ENCODE measurements at regions of chr10 and their contacts with region 1.

Region 1: DNA sequence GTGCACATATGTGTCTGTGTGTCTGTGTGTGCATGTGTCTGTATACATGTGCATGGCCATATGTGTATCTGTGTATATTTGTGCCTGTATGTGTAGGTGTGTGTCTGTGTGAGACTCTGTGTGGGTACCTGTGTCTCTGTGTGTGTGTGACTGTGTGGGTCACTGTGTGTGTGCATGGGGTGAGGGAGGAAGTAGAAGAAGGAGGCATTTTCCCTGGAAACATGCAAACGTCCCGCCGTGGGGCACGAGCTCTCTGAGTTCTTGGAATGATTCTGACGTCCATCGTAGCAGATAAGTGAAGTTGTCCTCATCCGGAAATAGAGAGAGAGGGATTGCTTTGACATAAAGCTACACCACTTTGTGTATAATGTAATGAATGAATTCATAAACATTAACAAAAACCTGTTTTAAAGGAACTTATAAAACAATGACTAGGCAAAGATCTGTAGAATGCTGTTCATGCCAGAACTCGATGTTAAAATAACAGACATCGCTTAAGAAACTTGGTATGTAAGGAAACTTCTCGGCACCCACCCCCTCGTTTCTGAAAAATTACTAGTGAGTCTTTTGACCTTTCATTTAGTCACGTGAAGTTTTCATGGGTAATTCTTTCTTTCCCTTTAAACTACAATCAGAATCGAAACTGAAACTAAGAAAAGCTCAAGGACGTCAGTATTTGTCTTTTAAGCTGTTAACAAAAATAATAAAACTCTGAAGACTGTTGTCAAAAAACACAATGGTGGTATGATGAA is 43.6 kb upstream of the KLF6 start:
- DNase-seq: no peak
- H3K4me3 ChIP-seq: no peak overlapping the region
- H3K27ac ChIP-seq: no peak overlapping the region
- H3K4me1 ChIP-seq: peaks cover 31% of the 10 kb centered on the region
- H3K27me3 ChIP-seq: no peaks in the 10 kb centered on the region
- CTCF ChIP-seq: no peak

Region 2: GRCh38 chr10:3852147-3852904 is 23.7 kb after region 1 on chr10:
- CTCF ChIA-PET with region 1: no interaction called
- POLR2A ChIA-PET with region 1: interaction called, 7 read pairs
- intact Hi-C with region 1: loop called (anchors 1 kb)
- DNase-seq: peak; percentile 74 to 99
- H3K4me3 ChIP-seq: peak overlapping the region; percentile 16; the same call in 1 of the 2 replicates
- H3K27ac ChIP-seq: peak overlapping the region; percentile 96
- H3K4me1 ChIP-seq: peaks cover 28% of the 10 kb centered on the region
- H3K27me3 ChIP-seq: no peaks in the 10 kb centered on the region
- CTCF ChIP-seq: no peak

Region 3: GRCh38 chr10:3895045-3895631 is 66.6 kb after region 1 on chr10:
- CTCF ChIA-PET with region 1: no interaction called
- POLR2A ChIA-PET with region 1: no interaction called
- intact Hi-C with region 1: loop called (anchors 5 kb)
- DNase-seq: peak in 1 of 2 experiments; percentile 47
- H3K4me3 ChIP-seq: no peak overlapping the region
- H3K27ac ChIP-seq: no peak overlapping the region
- H3K4me1 ChIP-seq: peaks cover 6% of the 10 kb centered on the region
- H3K27me3 ChIP-seq: no peaks in the 10 kb centered on the region
- CTCF ChIP-seq: no peak

Region 4: GRCh38 chr10:4803822-4804221 is 975.2 kb after region 1 on chr10:
- CTCF ChIA-PET with region 1: no interaction called
- POLR2A ChIA-PET with region 1: interaction called, 17 read pairs
- intact Hi-C with region 1: no loop called
- DNase-seq: no peak
- H3K4me3 ChIP-seq: no peak overlapping the region
- H3K27ac ChIP-seq: no peak overlapping the region
- H3K4me1 ChIP-seq: no peaks in the 10 kb centered on the region; the same call in 1 of the 2 replicates
- H3K27me3 ChIP-seq: no peaks in the 10 kb centered on the region
- CTCF ChIP-seq: no peak

Measured in PC-9 (cell line).